Right lobe of liver (tissue), 6 donors: ENCODE measurements at regions of chr22 and their contacts with region 1.

Region 1: DNA sequence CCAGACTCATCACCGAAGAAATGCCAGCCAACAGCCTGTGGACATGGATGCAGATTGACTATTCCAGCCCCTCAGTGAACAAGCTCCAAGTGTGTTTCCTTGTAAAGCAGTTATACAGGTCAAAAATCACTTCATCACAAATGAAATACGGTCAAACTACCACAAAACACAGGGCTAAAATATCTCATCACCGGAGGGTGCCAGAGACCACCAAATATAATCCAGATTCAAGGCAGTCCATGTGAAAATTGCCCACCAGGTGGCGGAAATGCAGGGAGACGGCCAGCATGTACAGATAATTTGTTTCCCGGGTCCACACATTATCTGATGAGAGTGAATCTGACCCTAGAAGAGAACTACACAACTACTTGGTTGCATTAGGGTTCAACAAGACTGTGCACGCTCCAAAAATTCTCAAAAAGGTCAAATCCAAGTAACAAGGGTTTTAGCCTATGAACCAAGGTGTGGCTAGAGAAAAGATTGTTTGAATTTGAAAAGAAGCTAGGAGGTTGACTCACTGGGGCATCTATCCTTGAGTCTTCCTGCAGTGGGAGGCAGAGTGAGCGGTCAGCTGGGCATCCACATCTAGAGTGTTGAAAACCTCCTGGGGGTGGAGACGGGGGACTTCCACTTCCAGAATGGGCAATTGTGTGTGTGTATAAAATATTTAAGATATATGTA is 71.7 kb downstream of the IGLL5 start:
- DNase-seq: peak; percentile 66 to 77 (median 74)
- ATAC-seq: peak; percentile 79 to 82 (median 80)
- H3K4me3 ChIP-seq: no peak overlapping the region
- H3K27ac ChIP-seq: no peak overlapping the region
- H3K4me1 ChIP-seq: peaks cover 0 to 18% (median 8%) of the 10 kb centered on the region in 4 donors
- H3K27me3 ChIP-seq: no peaks in the 10 kb centered on the region
- CTCF ChIP-seq: peak in 3 of 4 donors; percentile 87 to 99 (median 99)
- POLR2A ChIP-seq: no peak

Region 2: GRCh38 chr22:22787786-22788459 is 171.4 kb before region 1 on chr22:
- intact Hi-C with region 1: loop called in 1 of 2 experiments (anchors 5 kb)
- DNase-seq: peak; percentile 67 to 77 (median 68)
- ATAC-seq: peak; percentile 77 to 83 (median 78)
- H3K4me3 ChIP-seq: no peak overlapping the region
- H3K27ac ChIP-seq: no peak overlapping the region
- H3K4me1 ChIP-seq: peaks cover 0 to 3% (median 0%) of the 10 kb centered on the region in 4 donors
- H3K27me3 ChIP-seq: no peaks in the 10 kb centered on the region
- CTCF ChIP-seq: peak; percentile 55 to 91 (median 78)
- POLR2A ChIP-seq: no peak

Region 3: DNA sequence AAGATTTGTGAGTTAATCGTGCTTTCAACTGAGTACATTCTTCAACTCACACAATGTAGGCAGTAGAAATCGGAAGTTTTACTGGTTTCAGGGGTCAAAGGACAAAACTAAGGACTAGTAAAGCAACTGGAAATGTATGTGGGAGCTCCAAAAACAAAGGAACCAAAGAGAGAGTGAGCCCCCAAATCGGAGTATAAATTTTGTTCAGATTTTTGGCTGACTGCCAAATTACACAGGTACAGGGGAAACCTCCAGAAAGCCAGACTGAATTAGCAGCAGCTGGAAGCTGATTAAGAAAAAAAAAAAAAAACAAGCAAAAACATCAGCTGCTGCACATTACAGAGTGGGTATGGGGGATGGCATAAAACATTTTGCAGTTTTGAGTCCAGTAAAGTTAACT is 35.9 kb after region 1 on chr22:
- intact Hi-C with region 1: no loop called
- DNase-seq: no peak
- ATAC-seq: no peak
- H3K4me3 ChIP-seq: no peak overlapping the region
- H3K27ac ChIP-seq: no peak overlapping the region
- H3K4me1 ChIP-seq: no peaks in the 10 kb centered on the region
- H3K27me3 ChIP-seq: no peaks in the 10 kb centered on the region
- CTCF ChIP-seq: no peak
- POLR2A ChIP-seq: no peak

Region 4: DNA sequence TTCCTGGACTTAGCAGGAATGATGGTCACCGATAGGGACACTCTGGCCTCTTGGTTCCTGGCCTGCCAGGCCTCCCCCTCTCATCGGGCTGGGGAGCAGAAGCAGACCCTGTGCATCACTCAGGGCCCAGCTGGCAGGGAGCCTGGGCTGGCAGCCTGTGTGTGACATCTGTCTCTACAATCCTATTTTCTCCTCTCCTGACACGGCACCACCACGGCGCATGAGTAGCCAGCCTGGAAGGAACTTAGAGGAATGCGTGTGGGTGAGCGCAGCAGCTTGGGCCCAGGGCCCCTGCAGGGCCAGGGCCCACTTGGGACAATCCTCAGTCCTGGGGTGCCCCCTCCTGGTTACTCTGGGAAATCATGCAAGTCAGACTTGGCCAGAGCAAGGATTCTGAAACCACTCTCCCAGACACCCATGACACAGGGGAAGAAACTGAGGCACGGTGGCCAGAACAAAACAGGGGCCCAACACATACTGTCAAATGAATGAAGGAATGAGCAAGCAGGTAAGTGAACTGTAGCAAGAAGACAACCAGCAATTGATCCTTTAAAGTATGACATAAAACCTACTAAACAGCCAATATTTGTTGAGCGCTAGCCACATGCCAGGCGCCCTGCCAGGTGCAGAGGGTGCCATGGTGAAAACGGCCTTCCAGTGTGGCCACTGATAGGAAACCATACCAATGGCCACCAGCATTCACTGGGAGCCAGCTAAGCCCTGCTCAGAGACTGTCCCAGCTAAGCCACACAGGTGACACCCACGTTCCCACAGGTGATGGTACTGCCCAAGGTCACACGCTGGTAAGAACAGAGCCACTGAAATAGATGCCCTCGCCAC is 169.2 kb after region 1 on chr22:
- intact Hi-C with region 1: loop called (anchors 5 kb)
- DNase-seq: peak; percentile 63 to 70 (median 68)
- ATAC-seq: peak; percentile 81 to 95 (median 88)
- H3K4me3 ChIP-seq: no peak overlapping the region
- H3K27ac ChIP-seq: no peak overlapping the region
- H3K4me1 ChIP-seq: peaks cover 0 to 7% (median 0%) of the 10 kb centered on the region in 4 donors
- H3K27me3 ChIP-seq: no peaks in the 10 kb centered on the region
- CTCF ChIP-seq: peak; percentile 72 to 89 (median 79)
- POLR2A ChIP-seq: no peak